Gastrocnemius medialis (tissue), 4 donors: ENCODE measurements at regions of chr14 and their contacts with region 1.

Region 1: GRCh38 chr14:34671716-34672115 is 41.8 kb upstream of the SNX6 start:
- DNase-seq: no peak
- ATAC-seq: no peak
- H3K4me3 ChIP-seq: no peak overlapping the region
- H3K27ac ChIP-seq: no peak overlapping the region
- H3K4me1 ChIP-seq: peaks cover 0 to 2% of the 10 kb centered on the region in 2 donors
- H3K27me3 ChIP-seq: no peaks in the 10 kb centered on the region
- CTCF ChIP-seq: no peak
- POLR2A ChIP-seq: no peak

Region 2: DNA sequence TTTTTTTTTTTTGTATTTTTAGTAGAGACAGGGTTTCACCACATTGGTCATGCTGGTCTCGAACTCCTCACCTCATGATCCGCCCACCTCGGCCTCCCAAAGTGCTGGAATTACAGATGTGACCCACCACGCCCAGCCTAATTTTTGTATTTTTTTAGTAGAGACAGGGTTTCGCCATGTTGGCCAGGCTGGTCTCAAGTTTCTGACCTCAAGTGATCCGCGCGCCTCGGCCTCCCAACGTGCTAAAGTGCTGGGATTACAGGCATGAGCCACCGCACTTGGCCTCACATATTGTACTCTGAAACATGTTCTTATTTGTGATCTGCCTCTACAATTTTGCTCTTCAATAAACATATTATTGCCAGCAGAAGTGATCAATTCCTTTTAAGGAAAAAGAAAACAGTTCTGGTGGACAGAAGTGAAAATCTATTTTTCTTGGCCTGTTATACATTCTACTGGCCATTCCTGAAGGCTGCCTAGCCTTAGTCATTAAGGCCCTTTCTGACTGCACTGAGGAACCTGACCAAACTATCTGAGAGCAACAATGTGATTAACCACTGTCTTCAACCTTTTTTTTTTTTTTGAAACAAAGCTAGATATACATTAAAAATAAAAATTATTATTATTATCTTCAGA is 77.9 kb before region 1 on chr14:
- in situ Hi-C with region 1: no loop called
- intact Hi-C with region 1: no loop called
- DNase-seq: peak in 1 of 2 donors; percentile 58
- ATAC-seq: peak; percentile 20 to 48
- H3K4me3 ChIP-seq: no peak overlapping the region
- H3K27ac ChIP-seq: peak overlapping the region; percentile 69 to 84 (median 80)
- H3K4me1 ChIP-seq: peaks cover 22 to 49% of the 10 kb centered on the region in 2 donors
- H3K27me3 ChIP-seq: no peaks in the 10 kb centered on the region
- CTCF ChIP-seq: no peak
- POLR2A ChIP-seq: no peak

Region 3: GRCh38 chr14:34682787-34683321 is 11.1 kb after region 1 on chr14:
- in situ Hi-C with region 1: no loop called
- intact Hi-C with region 1: no loop called
- DNase-seq: no peak
- ATAC-seq: peak; percentile 80 to 87
- H3K4me3 ChIP-seq: no peak overlapping the region
- H3K27ac ChIP-seq: peak overlapping the region; percentile 66 to 76 (median 69)
- H3K4me1 ChIP-seq: peaks cover 28 to 30% of the 10 kb centered on the region in 2 donors
- H3K27me3 ChIP-seq: no peaks in the 10 kb centered on the region
- CTCF ChIP-seq: no peak
- POLR2A ChIP-seq: no peak

Region 4: GRCh38 chr14:34722717-34723545 is 51.2 kb after region 1 on chr14:
- in situ Hi-C with region 1: loop called (anchors 5 kb)
- intact Hi-C with region 1: loop called (anchors 1 kb)
- DNase-seq: peak in 1 of 2 donors; percentile 28
- ATAC-seq: peak; percentile 73 to 88
- H3K4me3 ChIP-seq: peak overlapping the region in 1 of 4 donors; percentile 9
- H3K27ac ChIP-seq: no peak overlapping the region
- H3K4me1 ChIP-seq: peaks cover 4% of the 10 kb centered on the region in 2 donors
- H3K27me3 ChIP-seq: no peaks in the 10 kb centered on the region
- CTCF ChIP-seq: peak; percentile 80 to 87 (median 86)
- POLR2A ChIP-seq: no peak